ENCODE measurements at regions of chr17 and their contacts with region 1.

Region 1: DNA sequence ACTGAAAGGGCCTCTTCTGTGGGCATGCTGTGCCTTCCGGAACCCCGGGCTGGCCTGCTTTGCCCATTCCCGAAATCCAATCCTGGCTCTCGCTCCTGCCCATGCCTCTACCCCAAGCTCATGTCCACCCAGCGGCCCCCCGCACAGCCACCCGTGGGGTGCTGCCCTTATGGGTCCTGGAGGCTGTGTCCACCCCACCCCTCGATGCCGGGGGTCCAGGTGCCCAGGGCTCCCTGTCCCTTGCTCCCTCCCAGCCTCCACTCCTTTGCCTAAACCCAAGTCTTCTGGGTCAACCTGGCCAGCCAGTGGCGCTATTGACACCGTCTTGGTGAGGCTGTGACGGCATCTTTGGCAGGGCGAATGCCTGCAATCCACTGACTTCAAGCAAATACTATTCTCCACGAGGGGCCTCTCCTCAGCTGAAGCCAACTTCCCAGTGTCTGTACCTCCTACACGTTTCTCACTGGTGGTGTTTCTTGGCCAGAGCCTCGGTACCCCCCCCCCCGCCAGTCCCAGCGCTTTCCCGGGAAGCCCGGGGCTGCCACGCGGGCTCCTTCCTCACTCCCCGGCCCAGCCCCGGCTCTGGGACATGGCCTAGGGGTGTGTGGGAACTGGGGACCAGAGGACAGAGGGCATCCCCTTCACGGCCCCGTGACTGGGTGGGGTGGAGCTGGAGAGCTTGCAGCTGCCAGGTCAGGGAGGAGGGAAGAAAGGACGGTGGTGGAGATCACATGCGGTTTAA is 12.2 kb upstream of the DUS1L start:
- DNase-seq: no peak
- H3K4me3 ChIP-seq: no peak overlapping the region
- H3K27ac ChIP-seq: no peak overlapping the region
- H3K4me1 ChIP-seq: no peaks in the 10 kb centered on the region
- H3K27me3 ChIP-seq: no peaks in the 10 kb centered on the region; a peak in 1 of 7 replicates
- CTCF ChIP-seq: peak; percentile 26 to 44 (median 33)
- EP300 ChIP-seq: no peak
- POLR2A ChIP-seq: no peak
- RAD21 ChIP-seq: peak in 1 of 2 experiments; percentile 39; a peak in 3 of 4 replicates

Region 2: DNA sequence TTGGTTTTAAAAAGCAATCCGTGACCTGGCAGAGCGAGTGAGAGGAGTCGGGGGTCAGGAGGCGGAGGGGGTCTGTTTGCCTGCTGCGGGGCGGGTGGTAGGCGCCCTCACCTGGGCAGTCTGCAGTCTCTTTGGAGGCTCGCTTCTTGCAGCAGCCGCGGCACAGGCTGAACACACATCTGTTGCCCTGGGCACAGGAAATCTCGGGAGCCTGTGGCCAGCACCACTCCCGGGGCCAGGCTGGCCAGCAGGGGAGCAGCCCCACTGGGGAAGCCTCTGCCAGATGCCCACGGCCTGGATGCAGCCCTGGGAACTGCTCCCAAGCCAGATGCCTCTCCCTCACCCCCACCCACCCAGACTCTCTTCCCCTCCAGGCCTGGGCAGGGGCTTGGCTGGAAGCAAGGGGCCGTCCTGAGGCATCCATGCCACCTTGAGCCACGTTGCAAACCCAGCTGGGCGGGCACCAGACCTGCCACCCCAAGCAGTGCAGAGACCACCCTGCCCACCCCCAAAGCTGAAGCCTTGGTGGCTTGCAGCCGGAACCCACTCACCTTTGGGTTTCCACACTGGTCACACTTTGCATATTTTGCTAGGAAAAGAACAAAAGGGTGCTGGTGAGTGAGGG is 19.4 kb before region 1 on chr17:
- CTCF ChIA-PET with region 1: interaction called, 15 read pairs
- POLR2A ChIA-PET with region 1: interaction called, 161 read pairs
- DNase-seq: no peak
- H3K4me3 ChIP-seq: no peak overlapping the region
- H3K27ac ChIP-seq: no peak overlapping the region
- H3K4me1 ChIP-seq: no peaks in the 10 kb centered on the region
- H3K27me3 ChIP-seq: no peaks in the 10 kb centered on the region
- CTCF ChIP-seq: no peak
- EP300 ChIP-seq: no peak
- POLR2A ChIP-seq: no peak
- RAD21 ChIP-seq: no peak; a peak in 1 of 4 replicates

Region 3: GRCh38 chr17:82065638-82066303 is 12.0 kb before region 1 on chr17 and contains the start of gene DUS1L:
- CTCF ChIA-PET with region 1: interaction called, 15 read pairs
- POLR2A ChIA-PET with region 1: interaction called, 161 read pairs
- DNase-seq: peak in 1 of 2 experiments; percentile 85
- H3K4me3 ChIP-seq: peak within 1 kb of the TSS; percentile 53 to 93 (median 77)
- H3K27ac ChIP-seq: no peak within 1 kb of the TSS
- H3K4me1 ChIP-seq: peaks cover 0 to 10% (median 5%) of the 10 kb centered on the region in 4 experiments; a peak in 5 of 7 replicates
- H3K27me3 ChIP-seq: no peaks in the 10 kb centered on the region
- CTCF ChIP-seq: no peak
- EP300 ChIP-seq: peak; percentile 17 to 60; a peak in 2 of 3 replicates
- POLR2A ChIP-seq: no peak
- RAD21 ChIP-seq: no peak
- total RNA-seq, gene DUS1L: 68.0 and 69.1 TPM in 2 replicates

Region 4: GRCh38 chr17:82092094-82092994 is 14.6 kb after region 1 on chr17:
- CTCF ChIA-PET with region 1: interaction called, 4 read pairs
- POLR2A ChIA-PET with region 1: interaction called, 105 read pairs
- DNase-seq: no peak
- H3K4me3 ChIP-seq: no peak overlapping the region
- H3K27ac ChIP-seq: no peak overlapping the region
- H3K4me1 ChIP-seq: peaks cover 0 to 13% (median 10%) of the 10 kb centered on the region in 4 experiments; a peak in 6 of 7 replicates
- H3K27me3 ChIP-seq: no peaks in the 10 kb centered on the region
- CTCF ChIP-seq: no peak
- EP300 ChIP-seq: no peak
- POLR2A ChIP-seq: no peak; a peak in 1 of 3 replicates
- RAD21 ChIP-seq: no peak

Region 5: DNA sequence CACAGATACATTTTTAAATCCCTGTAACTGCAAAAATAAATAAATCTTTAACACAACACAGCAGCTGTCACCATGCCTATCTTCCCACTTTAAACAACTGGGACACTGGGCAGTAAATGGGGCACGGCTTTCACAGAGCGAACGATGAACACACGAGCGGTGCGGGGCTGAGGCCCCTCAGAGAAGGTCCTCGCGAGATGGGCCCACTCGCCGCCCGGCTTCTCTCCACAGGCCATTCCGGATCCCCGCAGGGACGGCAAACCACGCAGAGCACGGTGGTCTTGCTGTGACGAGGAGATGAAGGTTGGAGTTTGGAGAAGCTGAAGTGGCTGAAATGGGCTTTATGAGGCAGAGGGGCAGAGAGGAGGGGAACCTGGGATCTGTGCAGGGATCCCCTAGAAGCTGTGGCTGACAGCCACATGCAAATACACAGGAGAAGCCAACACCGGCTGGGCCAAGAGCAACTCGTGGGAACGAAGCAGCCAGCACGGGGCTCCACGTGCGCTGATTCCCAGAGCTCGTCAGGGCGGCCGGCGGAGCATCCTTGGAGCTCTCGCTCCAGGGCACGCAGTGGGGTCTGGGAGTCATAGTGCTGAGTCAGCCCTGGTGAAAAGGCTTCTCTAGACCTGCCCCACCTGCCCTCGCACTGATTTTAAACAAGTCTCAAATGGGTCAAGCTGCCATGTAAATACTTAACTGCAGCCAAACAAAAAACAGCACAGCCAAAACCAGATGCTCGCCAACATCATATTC is 103.2 kb after region 1 on chr17:
- CTCF ChIA-PET with region 1: no interaction called
- POLR2A ChIA-PET with region 1: no interaction called
- DNase-seq: no peak
- H3K4me3 ChIP-seq: no peak overlapping the region
- H3K27ac ChIP-seq: no peak overlapping the region
- H3K4me1 ChIP-seq: no peaks in the 10 kb centered on the region
- H3K27me3 ChIP-seq: peaks cover 20 to 40% (median 35%) of the 10 kb centered on the region in 4 experiments
- CTCF ChIP-seq: no peak
- EP300 ChIP-seq: no peak
- POLR2A ChIP-seq: no peak
- RAD21 ChIP-seq: no peak

Measured in H1 (cell line).